GM12878 (cell line): ENCODE measurements at regions of chr2 and their contacts with region 1.

Region 1: DNA sequence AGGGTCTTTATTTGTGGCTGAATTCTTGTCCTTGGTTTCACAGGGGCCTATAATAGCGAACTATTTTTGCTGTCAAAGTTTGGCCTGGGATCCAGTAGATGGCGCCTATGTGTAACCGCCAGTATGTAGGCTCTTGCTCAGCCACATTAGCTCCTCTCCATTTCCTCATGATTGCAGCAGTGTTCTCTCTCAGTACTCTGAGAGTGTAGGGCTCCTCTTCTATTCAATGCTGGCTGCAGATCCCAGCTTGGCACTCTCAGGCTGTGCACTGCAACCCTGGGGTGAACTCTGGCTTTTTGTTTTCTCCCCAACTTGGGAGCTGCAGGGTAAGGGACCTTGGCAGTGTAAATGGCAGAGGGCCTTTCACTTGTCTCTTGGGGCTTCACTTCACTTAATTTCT is 344.6 kb upstream of the CHAC2 start:
- DNase-seq: no peak
- ATAC-seq: peak; percentile 87
- H3K4me3 ChIP-seq: no peak overlapping the region
- H3K27ac ChIP-seq: no peak overlapping the region
- H3K4me1 ChIP-seq: peaks cover 4% of the 10 kb centered on the region; the same call in 1 of the 2 replicates
- H3K27me3 ChIP-seq: no peaks in the 10 kb centered on the region
- CTCF ChIP-seq: peak; percentile 52 to 63 (median 54)
- EP300 ChIP-seq: no peak
- POLR2A ChIP-seq: no peak
- RAD21 ChIP-seq: peak; percentile 62

Region 2: GRCh38 chr2:53103679-53104078 is 319.3 kb before region 1 on chr2:
- CTCF ChIA-PET with region 1: no interaction called
- POLR2A ChIA-PET with region 1: no interaction called
- RAD21 ChIA-PET with region 1: no interaction called
- SMC1A ChIA-PET with region 1: no interaction called
- in situ Hi-C with region 1: no loop called
- intact Hi-C with region 1: no loop called
- DNase-seq: no peak
- ATAC-seq: no peak
- H3K4me3 ChIP-seq: no peak overlapping the region
- H3K27ac ChIP-seq: no peak overlapping the region
- H3K4me1 ChIP-seq: no peaks in the 10 kb centered on the region
- H3K27me3 ChIP-seq: no peaks in the 10 kb centered on the region
- CTCF ChIP-seq: no peak
- EP300 ChIP-seq: no peak
- POLR2A ChIP-seq: no peak
- RAD21 ChIP-seq: no peak

Region 3: DNA sequence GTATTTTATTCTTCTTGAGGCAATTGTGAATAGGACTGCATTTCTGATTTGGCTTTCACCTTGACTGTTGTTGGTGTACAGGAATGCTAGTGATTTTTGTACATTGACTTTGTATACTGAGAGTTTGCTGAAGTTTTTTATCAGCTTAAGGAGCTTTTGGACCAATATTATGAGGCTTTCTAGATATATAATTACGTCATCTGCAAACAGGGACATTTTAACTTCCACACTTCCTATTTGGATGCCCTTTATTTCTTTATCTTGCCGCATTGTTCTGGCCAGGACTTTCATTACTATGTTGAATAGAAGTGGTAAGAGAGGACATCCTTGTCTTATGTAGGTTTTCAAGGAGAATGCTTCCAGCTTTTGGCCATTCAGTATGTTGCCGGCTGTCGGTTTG is 80.7 kb before region 1 on chr2:
- CTCF ChIA-PET with region 1: no interaction called
- POLR2A ChIA-PET with region 1: no interaction called
- RAD21 ChIA-PET with region 1: no interaction called
- SMC1A ChIA-PET with region 1: no interaction called
- in situ Hi-C with region 1: no loop called
- intact Hi-C with region 1: no loop called
- DNase-seq: no peak
- ATAC-seq: no peak
- H3K4me3 ChIP-seq: no peak overlapping the region
- H3K27ac ChIP-seq: no peak overlapping the region
- H3K4me1 ChIP-seq: no peaks in the 10 kb centered on the region
- H3K27me3 ChIP-seq: no peaks in the 10 kb centered on the region
- CTCF ChIP-seq: no peak
- EP300 ChIP-seq: no peak
- POLR2A ChIP-seq: no peak
- RAD21 ChIP-seq: no peak

Region 4: DNA sequence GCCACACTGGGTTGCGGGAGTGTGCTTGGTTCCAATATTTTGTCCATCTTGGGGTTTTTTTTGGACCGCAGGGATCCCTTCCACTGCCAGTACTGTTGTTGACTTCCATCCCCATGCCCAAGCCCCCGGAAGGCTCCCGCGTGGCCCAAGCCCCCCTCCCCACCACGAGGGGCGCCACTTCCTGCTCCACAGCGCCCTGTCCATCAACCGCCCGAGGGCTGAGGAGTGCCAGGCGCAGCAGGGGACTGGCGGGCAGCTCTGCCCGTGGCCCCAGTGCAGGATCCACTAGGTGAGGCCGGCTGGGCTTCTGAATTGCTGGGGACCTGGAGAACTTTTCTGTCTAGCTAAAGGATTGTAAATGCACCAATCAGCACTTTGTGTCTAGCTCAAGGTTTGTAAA is 63.2 kb after region 1 on chr2:
- CTCF ChIA-PET with region 1: no interaction called
- POLR2A ChIA-PET with region 1: no interaction called
- RAD21 ChIA-PET with region 1: no interaction called
- SMC1A ChIA-PET with region 1: no interaction called
- in situ Hi-C with region 1: no loop called
- intact Hi-C with region 1: no loop called
- DNase-seq: no peak
- ATAC-seq: no peak
- H3K4me3 ChIP-seq: no peak overlapping the region
- H3K27ac ChIP-seq: no peak overlapping the region
- H3K4me1 ChIP-seq: no peaks in the 10 kb centered on the region
- H3K27me3 ChIP-seq: no peaks in the 10 kb centered on the region
- CTCF ChIP-seq: no peak
- EP300 ChIP-seq: no peak
- POLR2A ChIP-seq: no peak
- RAD21 ChIP-seq: no peak

Region 5: GRCh38 chr2:53715568-53715967 is 292.6 kb after region 1 on chr2:
- CTCF ChIA-PET with region 1: interaction called, 6 read pairs
- POLR2A ChIA-PET with region 1: no interaction called
- RAD21 ChIA-PET with region 1: interaction called, 5 read pairs
- SMC1A ChIA-PET with region 1: interaction called, 12 read pairs
- in situ Hi-C with region 1: no loop called
- intact Hi-C with region 1: loop called (anchors 5 kb)
- DNase-seq: no peak
- ATAC-seq: peak; percentile 43; the same call in 1 of the 3 replicates
- H3K4me3 ChIP-seq: no peak overlapping the region
- H3K27ac ChIP-seq: no peak overlapping the region
- H3K4me1 ChIP-seq: no peaks in the 10 kb centered on the region
- H3K27me3 ChIP-seq: no peaks in the 10 kb centered on the region
- CTCF ChIP-seq: peak in 2 of 3 experiments; percentile 18 to 36; a peak in 3 of 6 replicates
- EP300 ChIP-seq: no peak
- POLR2A ChIP-seq: no peak
- RAD21 ChIP-seq: 0 out of 2 replicates have a peak, but pooled peaks have one; percentile 20

Region 6: GRCh38 chr2:53740170-53740569 is 317.2 kb after region 1 on chr2:
- CTCF ChIA-PET with region 1: interaction called, 3 read pairs
- POLR2A ChIA-PET with region 1: no interaction called
- RAD21 ChIA-PET with region 1: no interaction called
- SMC1A ChIA-PET with region 1: interaction called, 4 read pairs
- in situ Hi-C with region 1: no loop called
- intact Hi-C with region 1: loop called (anchors 5 kb)
- DNase-seq: no peak
- ATAC-seq: no peak
- H3K4me3 ChIP-seq: no peak overlapping the region
- H3K27ac ChIP-seq: no peak overlapping the region
- H3K4me1 ChIP-seq: no peaks in the 10 kb centered on the region; the same call in 1 of the 2 replicates
- H3K27me3 ChIP-seq: no peaks in the 10 kb centered on the region
- CTCF ChIP-seq: peak; percentile 10 to 32 (median 21); a peak in 3 of 6 replicates
- EP300 ChIP-seq: no peak
- POLR2A ChIP-seq: no peak
- RAD21 ChIP-seq: peak; percentile 60

Region 7: DNA sequence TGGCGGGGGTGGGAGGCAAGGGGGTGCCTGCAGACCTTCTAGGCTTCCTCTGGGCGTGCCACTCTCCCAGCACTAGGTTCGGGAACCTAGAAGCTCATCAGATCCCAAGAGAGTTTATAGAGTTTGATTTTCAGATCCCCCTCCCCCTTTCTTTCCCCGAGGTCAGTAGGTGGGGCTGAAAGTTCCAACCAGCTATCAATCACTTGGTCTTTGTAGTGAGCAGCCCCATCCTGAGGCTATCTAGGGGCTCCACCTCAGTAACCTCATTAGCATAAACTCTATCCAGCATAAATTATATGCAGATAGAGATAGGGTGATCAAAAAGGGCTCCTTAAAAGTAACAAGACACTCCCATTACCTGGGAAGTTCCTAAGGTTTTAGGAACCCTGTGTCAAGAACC is 396.7 kb after region 1 on chr2:
- CTCF ChIA-PET with region 1: interaction called, 8 read pairs
- POLR2A ChIA-PET with region 1: no interaction called
- RAD21 ChIA-PET with region 1: no interaction called
- SMC1A ChIA-PET with region 1: no interaction called
- in situ Hi-C with region 1: no loop called
- intact Hi-C with region 1: loop called (anchors 5 kb)
- DNase-seq: no peak
- ATAC-seq: no peak
- H3K4me3 ChIP-seq: no peak overlapping the region
- H3K27ac ChIP-seq: no peak overlapping the region
- H3K4me1 ChIP-seq: no peaks in the 10 kb centered on the region
- H3K27me3 ChIP-seq: no peaks in the 10 kb centered on the region
- CTCF ChIP-seq: no peak
- EP300 ChIP-seq: no peak
- POLR2A ChIP-seq: no peak
- RAD21 ChIP-seq: no peak